ENCODE measurements at regions of chr7 and their contacts with region 1.

Region 1: DNA sequence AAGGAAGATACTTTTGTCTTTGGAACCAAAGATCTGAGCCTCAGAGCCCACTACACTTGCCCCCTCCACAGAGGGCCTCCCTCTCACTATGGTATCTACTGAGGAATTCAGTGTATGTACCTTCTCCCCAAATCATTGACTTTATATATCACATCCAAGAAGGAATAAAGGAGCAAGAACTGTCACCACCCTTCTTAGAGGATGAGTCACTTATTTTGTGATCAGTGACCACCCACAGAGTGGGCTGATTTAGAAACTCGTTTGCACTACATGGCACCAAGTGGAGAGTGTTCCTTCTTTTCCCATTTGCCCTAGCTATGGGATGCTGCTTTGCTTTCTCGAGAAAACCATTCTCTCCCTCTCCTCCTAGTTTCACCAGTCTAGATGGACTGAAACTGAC is 5.7 kb downstream of the TMEM243 start:
- DNase-seq: no peak
- H3K4me3 ChIP-seq: no peak overlapping the region
- H3K4me3 Mint-ChIP-seq: peak overlapping the region; percentile 38 to 94 (median 80)
- H3K27ac ChIP-seq: peak overlapping the region; percentile 34
- H3K27ac Mint-ChIP-seq: peak overlapping the region; percentile 29 to 94 (median 75)
- H3K4me1 ChIP-seq: peaks cover 93% of the 10 kb centered on the region
- H3K4me1 Mint-ChIP-seq: peaks cover 65 to 97% (median 80%) of the 10 kb centered on the region in 4 donors
- H3K27me3 ChIP-seq: no peaks in the 10 kb centered on the region
- H3K27me3 Mint-ChIP-seq: no peaks in the 10 kb centered on the region

Region 2: DNA sequence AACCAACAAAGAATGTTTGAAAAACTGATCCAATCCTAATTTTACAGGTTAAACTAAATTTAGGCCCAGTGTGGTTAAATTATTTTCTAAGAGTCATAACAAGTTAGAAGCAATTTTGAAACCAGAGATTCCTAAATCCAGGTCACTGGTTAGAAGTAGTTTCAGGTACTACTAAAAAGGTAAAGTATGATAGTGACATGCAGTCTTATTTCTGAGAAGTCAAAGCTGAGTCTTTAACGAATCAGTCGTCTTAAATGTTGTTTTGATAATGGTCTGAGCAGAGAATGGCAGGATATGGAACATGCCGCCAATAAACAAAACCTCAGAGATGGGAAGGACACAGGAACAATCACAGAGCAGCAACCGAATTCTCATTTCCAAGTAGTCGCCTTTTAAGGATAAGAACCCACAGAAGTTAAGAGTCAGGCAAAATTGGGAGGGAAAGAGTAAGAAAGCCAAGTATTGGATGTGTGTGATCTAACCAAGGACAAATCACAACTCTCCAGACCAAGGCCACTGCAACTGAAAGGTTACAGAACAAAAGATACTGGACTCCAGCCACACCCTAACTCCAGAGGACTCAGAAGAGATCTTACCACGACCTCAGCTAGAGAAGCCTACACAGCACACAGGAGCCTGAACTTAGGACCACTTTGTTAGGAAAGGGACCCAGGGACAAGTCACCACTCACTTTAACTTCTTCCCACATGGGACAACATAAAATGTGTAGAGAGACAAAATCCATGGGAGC is 13.9 kb before region 1 on chr7:
- CTCF ChIA-PET with region 1: interaction called, 6 read pairs
- POLR2A ChIA-PET with region 1: interaction called, 60 read pairs
- intact Hi-C with region 1: loop called (anchors 1 kb)
- DNase-seq: no peak
- H3K4me3 ChIP-seq: no peak overlapping the region
- H3K4me3 Mint-ChIP-seq: peak overlapping the region in 4 of 8 donors; percentile 6 to 54 (median 32)
- H3K27ac ChIP-seq: no peak overlapping the region
- H3K27ac Mint-ChIP-seq: peak overlapping the region; percentile 17 to 85 (median 64)
- H3K4me1 ChIP-seq: peaks cover 53% of the 10 kb centered on the region
- H3K4me1 Mint-ChIP-seq: peaks cover 45 to 67% (median 59%) of the 10 kb centered on the region in 4 donors
- H3K27me3 ChIP-seq: no peaks in the 10 kb centered on the region
- H3K27me3 Mint-ChIP-seq: no peaks in the 10 kb centered on the region